ENCODE measurements at regions of chr4 and their contacts with region 1.

Region 1: DNA sequence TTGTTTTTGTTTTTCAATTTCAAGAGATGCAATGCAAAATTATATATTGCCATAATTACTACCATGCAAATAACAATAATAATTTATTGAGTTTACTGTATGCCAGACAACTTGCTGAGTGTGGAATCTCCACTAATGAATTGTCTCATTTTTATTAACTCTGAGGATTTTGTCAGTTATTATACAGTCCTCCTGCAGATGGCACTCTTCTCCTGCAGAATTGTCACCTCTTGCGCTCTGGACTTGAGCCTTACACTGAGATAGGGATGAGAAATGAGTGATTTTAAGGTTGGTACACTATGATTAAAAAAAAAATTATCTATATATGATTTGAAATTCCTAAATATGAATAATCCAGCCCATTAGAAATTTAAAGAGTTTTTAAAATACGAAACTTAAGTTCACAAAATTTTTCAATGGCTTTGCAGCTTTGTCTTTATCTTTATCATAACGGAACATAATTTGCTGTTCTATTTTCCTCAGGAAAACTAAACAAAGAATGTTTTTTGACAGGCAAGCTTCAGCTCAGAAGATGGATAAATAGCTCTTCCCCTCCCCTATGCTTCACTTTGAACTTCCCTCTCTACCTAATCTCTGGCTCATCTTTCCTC is 12.7 kb upstream of the PAQR3 start:
- DNase-seq: peak; percentile 66

Region 2: DNA sequence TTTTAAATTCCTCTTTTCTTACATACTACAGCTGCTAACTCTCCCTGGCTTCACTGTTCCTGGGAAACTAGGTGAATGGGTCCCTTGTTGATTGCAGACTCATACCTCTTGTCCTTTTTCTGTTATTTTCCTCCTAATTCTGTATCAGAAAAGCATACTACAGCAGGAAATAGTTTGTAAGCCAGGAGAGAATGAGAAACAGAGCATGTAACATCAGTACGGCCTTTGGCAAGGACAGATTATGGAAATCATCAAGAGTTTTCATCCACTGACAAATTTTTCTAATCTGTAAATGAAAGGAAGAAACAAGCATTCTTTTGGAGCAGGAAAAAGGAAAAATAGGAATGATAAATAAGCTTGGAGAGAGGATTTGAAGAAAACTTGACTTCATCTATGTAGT is 881.9 kb after region 1 on chr4:
- in situ Hi-C with region 1: no loop called
- DNase-seq: no peak

Region 3: DNA sequence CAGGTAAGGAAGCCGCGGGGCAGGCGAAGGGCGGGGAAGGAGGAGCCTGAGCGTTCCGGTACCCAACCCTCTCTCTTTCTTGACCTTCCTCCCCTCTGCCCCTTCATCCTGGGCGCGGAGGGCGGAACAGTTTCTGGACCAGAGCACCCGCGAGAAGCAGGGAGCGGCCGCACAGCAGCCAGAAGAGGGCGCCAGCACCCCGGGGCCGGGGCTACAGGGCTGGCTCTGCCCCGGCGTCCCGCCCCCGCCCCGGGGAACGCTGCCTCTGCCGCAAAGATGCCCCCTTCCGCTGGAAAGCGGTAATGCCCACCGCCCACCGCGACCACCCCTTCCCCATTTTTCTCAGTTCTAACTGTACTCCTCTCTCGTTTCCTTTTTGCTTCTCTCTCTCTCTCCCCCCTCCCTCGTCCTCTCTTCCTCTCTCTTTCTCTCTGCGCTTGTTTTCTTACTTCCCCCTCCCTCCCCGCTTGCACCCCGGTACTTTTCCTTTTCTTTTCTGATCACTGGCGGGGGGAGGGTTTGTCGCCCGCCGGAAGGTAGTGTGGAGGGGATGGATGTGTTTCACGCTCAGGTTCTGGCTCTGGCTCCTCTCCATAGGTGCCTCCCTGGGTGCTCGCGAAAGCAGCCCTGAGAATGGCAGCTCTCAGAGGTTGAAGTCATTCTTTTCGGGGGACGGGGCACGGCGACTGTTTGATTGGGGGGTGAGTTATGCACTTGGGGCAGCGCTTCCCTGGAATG is 1232.3 kb after region 1 on chr4:
- in situ Hi-C with region 1: loop called (anchors 25 kb)
- DNase-seq: peak; percentile 92

Region 4: GRCh38 chr4:80335554-80336358 is 1383.8 kb after region 1 on chr4 and contains the start of gene CFAP299:
- in situ Hi-C with region 1: loop called (anchors 25 kb)
- DNase-seq: peak; percentile 95